ENCODE measurements at regions of chr13 and their contacts with region 1.

Region 1: GRCh38 chr13:73058736-73059459 is at the start of gene KLF5:
- DNase-seq: peak; percentile 85
- ATAC-seq: peak; percentile 98
- H3K4me3 ChIP-seq: peak within 1 kb of the TSS; percentile 73 to 87 (median 82)
- H3K27ac ChIP-seq: no peak within 1 kb of the TSS
- H3K4me1 ChIP-seq: peaks cover 41% of the 10 kb centered on the region
- H3K27me3 ChIP-seq: peaks cover 0 to 17% of the 10 kb centered on the region in 2 experiments; a peak in 3 of 5 replicates
- CTCF ChIP-seq: no peak
- EP300 ChIP-seq: no peak
- POLR2A ChIP-seq: peak; percentile 43 to 69; a peak in 3 of 4 replicates
- RAD21 ChIP-seq: no peak
- total RNA-seq, gene KLF5: 0.52 and 1.7 TPM in 2 replicates

Region 2: DNA sequence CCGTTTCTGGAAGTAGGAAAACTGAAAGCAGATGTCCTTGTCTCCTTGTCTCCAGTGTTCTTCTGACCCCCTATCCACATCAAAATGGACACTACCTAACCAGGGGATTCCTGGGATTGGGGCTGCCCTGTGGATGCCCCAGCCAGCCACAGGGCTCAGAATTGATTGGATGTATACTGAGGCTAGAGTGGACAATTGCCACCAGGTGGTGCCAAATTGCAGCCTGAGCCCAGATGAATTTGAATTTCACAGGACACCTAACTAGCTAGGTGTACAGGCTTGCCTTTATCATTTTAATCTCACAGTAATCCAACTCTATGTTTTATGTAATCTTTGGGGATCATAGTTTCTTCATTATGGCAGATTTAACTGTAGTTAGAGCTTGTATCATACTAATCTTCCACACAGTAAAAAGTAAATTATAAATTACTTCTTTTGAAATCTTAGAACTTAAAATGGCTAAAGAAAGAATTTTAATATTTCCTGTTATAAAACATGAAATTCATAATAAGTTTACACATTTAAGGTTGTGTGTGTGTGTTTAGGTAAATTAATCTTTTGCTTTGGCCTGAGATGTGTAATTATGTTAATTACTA is 219.0 kb before region 1 on chr13:
- CTCF ChIA-PET with region 1: no interaction called
- POLR2A ChIA-PET with region 1: no interaction called
- in situ Hi-C with region 1: no loop called
- intact Hi-C with region 1: loop called (anchors 2 kb)
- DNase-seq: peak; percentile 56
- ATAC-seq: peak; percentile 100
- H3K4me3 ChIP-seq: no peak overlapping the region
- H3K27ac ChIP-seq: no peak overlapping the region
- H3K4me1 ChIP-seq: no peaks in the 10 kb centered on the region
- H3K27me3 ChIP-seq: no peaks in the 10 kb centered on the region
- CTCF ChIP-seq: peak; percentile 83
- EP300 ChIP-seq: no peak
- POLR2A ChIP-seq: no peak
- RAD21 ChIP-seq: peak; percentile 69

Region 3: GRCh38 chr13:73210218-73210883 is 151.5 kb after region 1 on chr13:
- CTCF ChIA-PET with region 1: no interaction called
- POLR2A ChIA-PET with region 1: no interaction called
- in situ Hi-C with region 1: no loop called
- intact Hi-C with region 1: loop called (anchors 2 kb)
- DNase-seq: peak; percentile 82
- ATAC-seq: peak; percentile 94
- H3K4me3 ChIP-seq: no peak overlapping the region
- H3K27ac ChIP-seq: peak overlapping the region; percentile 69
- H3K4me1 ChIP-seq: peaks cover 25% of the 10 kb centered on the region
- H3K27me3 ChIP-seq: no peaks in the 10 kb centered on the region
- CTCF ChIP-seq: no peak
- EP300 ChIP-seq: peak in 1 of 2 experiments; percentile 69; a peak in 1 of 4 replicates
- POLR2A ChIP-seq: no peak
- RAD21 ChIP-seq: no peak

Region 4: GRCh38 chr13:73417015-73417623 is 358.2 kb after region 1 on chr13:
- CTCF ChIA-PET with region 1: no interaction called
- POLR2A ChIA-PET with region 1: no interaction called
- in situ Hi-C with region 1: loop called (anchors 25 kb)
- intact Hi-C with region 1: loop called (anchors 5 kb)
- DNase-seq: peak; percentile 27
- ATAC-seq: peak; percentile 94
- H3K4me3 ChIP-seq: no peak overlapping the region
- H3K27ac ChIP-seq: no peak overlapping the region
- H3K4me1 ChIP-seq: no peaks in the 10 kb centered on the region
- H3K27me3 ChIP-seq: no peaks in the 10 kb centered on the region
- CTCF ChIP-seq: peak; percentile 61
- EP300 ChIP-seq: no peak
- POLR2A ChIP-seq: no peak
- RAD21 ChIP-seq: no peak

Region 5: GRCh38 chr13:73708393-73708985 is 649.6 kb after region 1 on chr13:
- CTCF ChIA-PET with region 1: no interaction called
- POLR2A ChIA-PET with region 1: no interaction called
- in situ Hi-C with region 1: no loop called
- intact Hi-C with region 1: loop called (anchors 1 kb)
- DNase-seq: peak; percentile 59
- ATAC-seq: peak; percentile 88
- H3K4me3 ChIP-seq: no peak overlapping the region
- H3K27ac ChIP-seq: no peak overlapping the region
- H3K4me1 ChIP-seq: no peaks in the 10 kb centered on the region
- H3K27me3 ChIP-seq: no peaks in the 10 kb centered on the region
- CTCF ChIP-seq: peak; percentile 79
- EP300 ChIP-seq: no peak
- POLR2A ChIP-seq: no peak
- RAD21 ChIP-seq: peak; percentile 70

Measured in HepG2 (cell line).